ENCODE measurements at regions of chr2 and their contacts with region 1.

Region 1: GRCh38 chr2:241149925-241150659 is at the start of gene PPP1R7:
- DNase-seq: peak; percentile 86 to 97 (median 94)
- ATAC-seq: peak; percentile 80 to 83
- H3K4me3 Mint-ChIP-seq: peak within 1 kb of the TSS; percentile 94 to 100 (median 98)
- H3K27ac Mint-ChIP-seq: peak within 1 kb of the TSS; percentile 89 to 99 (median 96)
- H3K4me1 Mint-ChIP-seq: peaks cover 23 to 42% (median 35%) of the 10 kb centered on the region in 4 donors
- H3K27me3 Mint-ChIP-seq: no peaks in the 10 kb centered on the region
- polyA plus RNA-seq, gene PPP1R7: 109 to 115 (median 112) TPM

Region 2: GRCh38 chr2:241009601-241010530 is 140.2 kb before region 1 on chr2:
- POLR2A ChIA-PET with region 1: interaction called, 17 read pairs
- DNase-seq: peak; percentile 43 to 85 (median 68)
- ATAC-seq: peak; percentile 75 to 87
- H3K4me3 Mint-ChIP-seq: peak overlapping the region; percentile 58 to 90 (median 78)
- H3K27ac Mint-ChIP-seq: peak overlapping the region; percentile 88 to 97 (median 96)
- H3K4me1 Mint-ChIP-seq: peaks cover 37 to 82% (median 61%) of the 10 kb centered on the region in 4 donors
- H3K27me3 Mint-ChIP-seq: no peaks in the 10 kb centered on the region

Region 3: GRCh38 chr2:241081643-241082340 is 68.3 kb before region 1 on chr2:
- POLR2A ChIA-PET with region 1: interaction called, 42 read pairs
- DNase-seq: no peak
- ATAC-seq: no peak
- H3K4me3 Mint-ChIP-seq: no peak overlapping the region
- H3K27ac Mint-ChIP-seq: peak overlapping the region in 8 of 10 donors; percentile 32 to 94 (median 82)
- H3K4me1 Mint-ChIP-seq: peaks cover 8 to 36% (median 24%) of the 10 kb centered on the region in 4 donors
- H3K27me3 Mint-ChIP-seq: no peaks in the 10 kb centered on the region

Region 4: GRCh38 chr2:241096979-241097378 is 53.1 kb before region 1 on chr2:
- POLR2A ChIA-PET with region 1: interaction called, 85 read pairs
- DNase-seq: no peak
- ATAC-seq: no peak
- H3K4me3 Mint-ChIP-seq: peak overlapping the region in 7 of 10 donors; percentile 30 to 97 (median 68)
- H3K27ac Mint-ChIP-seq: peak overlapping the region; percentile 79 to 99 (median 94)
- H3K4me1 Mint-ChIP-seq: peaks cover 33 to 79% (median 72%) of the 10 kb centered on the region in 4 donors
- H3K27me3 Mint-ChIP-seq: no peaks in the 10 kb centered on the region

Region 5: GRCh38 chr2:241102239-241102803 is 47.8 kb before region 1 on chr2 and contains the start of gene MTERF4:
- POLR2A ChIA-PET with region 1: interaction called, 135 read pairs
- DNase-seq: peak; percentile 79 to 90 (median 85)
- ATAC-seq: peak; percentile 91 to 94
- H3K4me3 Mint-ChIP-seq: peak within 1 kb of the TSS; percentile 94 to 99 (median 97)
- H3K27ac Mint-ChIP-seq: peak within 1 kb of the TSS; percentile 92 to 99 (median 98)
- H3K4me1 Mint-ChIP-seq: peaks cover 20 to 75% (median 69%) of the 10 kb centered on the region in 4 donors
- H3K27me3 Mint-ChIP-seq: no peaks in the 10 kb centered on the region
- polyA plus RNA-seq, gene MTERF4: 46.4 to 82.1 (median 57.8) TPM

Region 6: GRCh38 chr2:241110607-241111439 is 39.3 kb before region 1 on chr2:
- POLR2A ChIA-PET with region 1: interaction called, 135 read pairs
- DNase-seq: peak in 1 of 10 donors; percentile 30
- ATAC-seq: peak; percentile 19 to 28
- H3K4me3 Mint-ChIP-seq: peak overlapping the region; percentile 85 to 99 (median 94)
- H3K27ac Mint-ChIP-seq: peak overlapping the region; percentile 92 to 99 (median 98)
- H3K4me1 Mint-ChIP-seq: peaks cover 25 to 64% (median 58%) of the 10 kb centered on the region in 4 donors
- H3K27me3 Mint-ChIP-seq: no peaks in the 10 kb centered on the region

Region 7: DNA sequence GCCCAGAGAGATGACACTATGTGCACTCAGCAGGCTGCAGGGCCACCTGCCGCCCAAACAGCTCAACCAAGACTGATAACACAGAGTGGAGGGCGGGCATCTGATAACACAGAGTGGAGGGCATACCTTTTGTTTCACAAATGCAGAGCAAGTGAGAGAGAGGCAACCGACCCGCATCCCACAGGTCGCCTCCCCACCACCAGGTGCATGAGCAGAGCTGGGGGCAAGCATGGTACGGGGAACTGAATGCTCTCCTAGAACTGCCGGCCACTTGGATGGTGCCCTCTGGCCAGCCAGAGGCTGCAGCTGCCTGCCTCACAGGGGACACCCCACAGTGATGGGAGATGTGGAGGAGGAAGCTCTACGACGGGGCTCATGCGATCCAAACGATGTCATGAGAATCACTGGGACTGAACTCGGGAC is 87.9 kb after region 1 on chr2:
- POLR2A ChIA-PET with region 1: no interaction called
- DNase-seq: no peak
- ATAC-seq: no peak
- H3K4me3 Mint-ChIP-seq: no peak overlapping the region
- H3K27ac Mint-ChIP-seq: no peak overlapping the region
- H3K4me1 Mint-ChIP-seq: peaks cover 0 to 2% (median 0%) of the 10 kb centered on the region in 4 donors
- H3K27me3 Mint-ChIP-seq: no peaks in the 10 kb centered on the region

Region 8: GRCh38 chr2:241289597-241289996 is 139.5 kb after region 1 on chr2:
- POLR2A ChIA-PET with region 1: no interaction called
- DNase-seq: no peak
- ATAC-seq: no peak
- H3K4me3 Mint-ChIP-seq: no peak overlapping the region
- H3K27ac Mint-ChIP-seq: peak overlapping the region in 1 of 10 donors; percentile 20
- H3K4me1 Mint-ChIP-seq: peaks cover 28 to 65% (median 58%) of the 10 kb centered on the region in 4 donors
- H3K27me3 Mint-ChIP-seq: no peaks in the 10 kb centered on the region

Region 9: GRCh38 chr2:241315093-241315878 is 165.2 kb after region 1 on chr2 and contains the start of gene HDLBP:
- POLR2A ChIA-PET with region 1: interaction called, 13 read pairs
- DNase-seq: peak; percentile 99 to 100 (median 100)
- ATAC-seq: peak; percentile 73 to 75
- H3K4me3 Mint-ChIP-seq: peak within 1 kb of the TSS; percentile 92 to 100 (median 98)
- H3K27ac Mint-ChIP-seq: peak within 1 kb of the TSS; percentile 93 to 100 (median 99)
- H3K4me1 Mint-ChIP-seq: peaks cover 39 to 79% (median 75%) of the 10 kb centered on the region in 4 donors
- H3K27me3 Mint-ChIP-seq: peaks cover 0 to 2% (median 0%) of the 10 kb centered on the region in 5 donors
- polyA plus RNA-seq, gene HDLBP: 32.2 to 71.1 (median 45.7) TPM

Measured in naive thymus-derived CD8-positive, alpha-beta T cell (primary cell).